ENCODE measurements at regions of chr19 and their contacts with region 1.

Region 1: GRCh38 chr19:36378625-36379509 is at the start of gene ZFP14:
- DNase-seq: peak; percentile 91 to 97 (median 95)
- H3K4me3 ChIP-seq: peak within 1 kb of the TSS; percentile 66 to 96 (median 86)
- H3K27ac ChIP-seq: peak within 1 kb of the TSS; percentile 49 to 97 (median 88)
- H3K27me3 ChIP-seq: no peaks in the 10 kb centered on the region
- CTCF ChIP-seq: peak in 35 of 56 donors; percentile 7 to 63 (median 33)
- total RNA-seq, gene ZFP14: 12.3 to 23.4 (median 16.5) TPM

Region 2: GRCh38 chr19:36331353-36332228 is 47.3 kb before region 1 on chr19:
- intact Hi-C with region 1: loop called in 1 of 2 experiments (anchors 5 kb)
- DNase-seq: peak; percentile 83 to 97 (median 94)
- H3K4me3 ChIP-seq: peak overlapping the region; percentile 60 to 99 (median 86)
- H3K27ac ChIP-seq: peak overlapping the region in 15 of 59 donors; percentile 5 to 73 (median 36)
- H3K27me3 ChIP-seq: no peaks in the 10 kb centered on the region
- CTCF ChIP-seq: peak in 19 of 56 donors; percentile 6 to 41 (median 17)

Region 3: GRCh38 chr19:36418287-36419001 is 39.6 kb after region 1 on chr19 and contains the start of gene ZFP82:
- intact Hi-C with region 1: loop called in 1 of 2 experiments (anchors 2 kb)
- DNase-seq: peak; percentile 63 to 90 (median 76)
- H3K4me3 ChIP-seq: peak within 1 kb of the TSS; percentile 65 to 98 (median 85)
- H3K27ac ChIP-seq: peak within 1 kb of the TSS; percentile 57 to 97 (median 89)
- H3K27me3 ChIP-seq: no peaks in the 10 kb centered on the region
- CTCF ChIP-seq: peak in 33 of 56 donors; percentile 5 to 57 (median 23)
- total RNA-seq, gene ZFP82: 7.3 to 21.1 (median 13.8) TPM

Region 4: DNA sequence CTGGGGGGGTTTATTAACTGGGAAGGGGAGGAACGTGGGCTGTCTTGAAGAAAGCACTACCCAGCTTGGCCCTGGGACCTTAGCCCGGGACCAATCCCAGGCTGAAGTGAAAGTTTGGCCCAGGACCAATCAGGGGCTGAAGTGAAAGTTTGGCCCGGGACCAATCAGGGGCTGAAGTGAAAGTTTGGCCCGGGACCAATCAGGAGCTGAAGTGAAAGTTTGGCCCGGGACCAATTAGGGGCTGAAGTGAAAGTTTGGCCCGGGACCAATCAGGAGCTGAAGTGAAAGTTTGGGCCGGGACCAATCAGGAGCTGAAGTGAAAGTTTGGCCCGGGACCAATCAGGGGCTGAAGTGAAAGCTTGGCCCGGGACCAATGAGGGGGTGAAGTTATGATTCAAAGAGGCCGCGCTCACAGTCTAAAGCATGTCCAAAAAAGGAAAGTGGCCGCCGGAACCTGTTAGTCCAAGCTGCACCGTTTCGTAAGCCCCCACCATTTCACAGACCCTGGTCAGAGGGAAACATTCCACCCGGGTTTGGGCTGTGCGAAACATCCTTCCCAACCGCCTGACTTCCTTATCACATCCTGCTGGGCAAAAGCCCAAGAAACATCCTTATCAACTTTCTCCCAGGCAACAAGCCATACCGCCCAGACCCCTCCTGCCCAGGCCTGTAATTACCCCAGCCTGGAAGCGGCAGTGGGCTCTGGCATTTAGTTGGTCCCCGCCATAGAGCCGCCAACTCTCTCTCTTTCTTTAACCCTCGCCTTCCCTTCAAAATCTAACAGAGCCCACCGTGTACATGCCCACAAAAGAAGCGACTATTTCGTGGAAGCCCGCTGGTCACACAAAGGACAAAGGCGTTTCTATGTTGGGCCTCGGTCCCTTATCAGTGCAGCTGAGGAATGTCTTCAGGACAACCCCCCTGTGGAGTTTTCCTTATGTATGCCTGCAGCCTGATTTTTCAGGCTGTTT is 392.7 kb after region 1 on chr19:
- intact Hi-C with region 1: no loop called
- DNase-seq: peak in 1 of 10 donors; percentile 19
- H3K4me3 ChIP-seq: peak overlapping the region; percentile 21 to 100 (median 88)
- H3K27ac ChIP-seq: peak overlapping the region in 29 of 59 donors; percentile 7 to 97 (median 87)
- H3K27me3 ChIP-seq: no peaks in the 10 kb centered on the region
- CTCF ChIP-seq: no peak